RWPE1 (cell line): ENCODE measurements at regions of chr21 and their contacts with region 1.

Region 1: DNA sequence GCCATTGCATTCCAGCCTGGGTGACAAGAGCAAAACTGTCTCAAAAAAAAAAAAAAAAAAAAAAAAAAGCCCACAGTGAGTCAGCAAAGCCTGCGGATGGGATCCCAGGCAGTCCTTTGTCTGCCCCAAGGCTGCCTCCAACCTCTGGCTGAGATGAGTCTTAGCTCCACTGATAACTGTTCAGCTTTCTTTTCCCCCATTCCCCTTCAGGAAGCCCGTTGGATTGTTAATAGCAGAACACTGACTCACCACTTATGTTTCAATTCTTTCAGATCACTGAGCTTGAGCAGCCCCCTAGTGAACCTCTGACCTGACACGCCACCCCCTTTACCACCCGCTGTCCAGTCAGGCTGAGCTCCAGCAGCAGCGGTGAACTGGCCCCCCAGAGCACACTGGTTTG is 57.5 kb downstream of the ERG start:
- DNase-seq: peak; percentile 71
- H3K27ac ChIP-seq: no peak overlapping the region
- CTCF ChIP-seq: no peak

Region 2: DNA sequence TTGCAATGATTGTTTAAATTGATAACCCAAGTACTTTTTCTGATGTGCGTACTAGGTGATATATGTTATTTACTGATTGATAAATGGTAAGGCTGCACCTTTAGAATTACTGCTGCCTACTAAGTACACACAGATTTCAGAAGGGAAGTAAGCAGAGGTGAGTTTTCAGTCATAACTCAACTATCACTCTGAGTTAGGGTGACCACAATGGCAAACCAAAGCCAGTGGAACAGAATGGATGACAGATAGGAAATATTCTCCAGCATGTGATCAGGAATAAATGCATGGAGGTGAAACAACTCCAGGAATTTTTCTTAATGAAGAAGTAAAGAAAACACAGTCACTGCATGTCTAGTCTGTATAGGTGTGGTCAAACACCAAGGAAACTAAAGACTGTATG is 191.5 kb before region 1 on chr21:
- CTCF ChIA-PET with region 1: no interaction called
- POLR2A ChIA-PET with region 1: no interaction called
- DNase-seq: no peak
- H3K27ac ChIP-seq: no peak overlapping the region
- CTCF ChIP-seq: no peak

Region 3: GRCh38 chr21:38472412-38473108 is 31.8 kb after region 1 on chr21:
- CTCF ChIA-PET with region 1: interaction called, 4 read pairs
- POLR2A ChIA-PET with region 1: interaction called, 10 read pairs
- DNase-seq: no peak
- H3K27ac ChIP-seq: no peak overlapping the region
- CTCF ChIP-seq: no peak

Region 4: DNA sequence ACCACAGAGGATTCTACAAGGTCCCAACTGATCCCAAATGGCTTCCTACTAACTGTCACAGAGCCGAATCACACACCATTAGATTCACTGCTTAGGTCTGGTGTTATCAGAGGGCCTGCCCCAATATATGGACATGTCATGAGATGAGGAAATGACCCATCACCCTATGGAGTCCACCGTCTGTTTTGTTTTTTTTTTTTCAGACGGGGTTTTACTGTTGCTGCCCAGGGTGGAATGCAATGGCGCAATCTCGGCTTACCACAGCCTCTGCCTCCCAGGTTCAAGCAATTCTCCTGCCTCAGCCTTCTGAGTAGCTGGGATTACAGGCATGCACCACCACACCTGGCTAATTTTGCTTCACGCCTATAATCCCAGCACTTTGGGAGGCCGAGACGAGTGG is 281.2 kb after region 1 on chr21:
- CTCF ChIA-PET with region 1: no interaction called
- POLR2A ChIA-PET with region 1: no interaction called
- DNase-seq: no peak
- H3K27ac ChIP-seq: no peak overlapping the region
- CTCF ChIP-seq: no peak